Ascending aorta (tissue), 2 donors: ENCODE measurements at regions of chr15 and their contacts with region 1.

Region 1: DNA sequence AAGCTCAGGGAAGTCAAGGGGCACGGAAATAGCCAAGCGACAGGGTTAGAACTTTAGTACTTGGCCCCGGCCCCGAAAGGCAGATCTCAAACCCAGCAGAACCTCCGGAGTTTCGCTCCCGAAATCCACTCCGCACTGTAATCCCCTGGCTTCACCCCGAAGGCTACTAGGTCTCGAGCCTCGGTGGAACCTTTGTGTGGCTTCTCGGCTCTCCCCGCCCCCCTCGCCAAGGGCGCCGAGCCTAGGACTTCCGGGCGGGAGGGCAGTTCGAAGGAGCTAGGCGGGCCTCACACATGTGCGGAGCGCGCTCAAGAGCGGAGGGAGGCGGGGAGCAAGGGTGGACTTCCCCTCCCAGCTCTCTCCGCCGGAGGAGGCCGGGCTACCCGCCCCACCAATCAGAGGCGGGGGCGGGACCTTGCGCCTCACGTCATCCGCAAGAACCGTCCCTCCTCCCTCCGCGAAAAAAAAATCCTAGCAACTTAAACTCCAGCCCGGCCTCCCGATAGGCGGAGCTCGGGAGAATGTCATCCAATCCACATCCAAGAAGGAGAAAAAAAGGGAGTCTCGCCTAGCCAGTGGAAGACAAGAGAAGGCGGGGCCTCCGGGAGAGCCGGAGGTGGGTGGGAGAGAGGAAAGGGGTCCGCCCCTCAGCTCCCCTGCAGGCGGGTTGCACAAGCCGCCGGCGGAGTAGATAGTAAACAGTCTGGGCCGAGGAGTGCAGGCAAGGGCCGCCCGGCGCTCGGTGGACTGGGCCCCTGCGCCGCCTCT is 2.4 kb upstream of the SIN3A start:
- DNase-seq: peak; percentile 96 to 99
- H3K4me3 ChIP-seq: peak overlapping the region; percentile 77 to 96
- H3K27ac ChIP-seq: peak overlapping the region; percentile 97 to 98
- H3K4me1 ChIP-seq: peaks cover 2 to 13% of the 10 kb centered on the region in 2 donors
- H3K27me3 ChIP-seq: no peaks in the 10 kb centered on the region
- CTCF ChIP-seq: no peak

Region 2: GRCh38 chr15:75023181-75023871 is 430.6 kb before region 1 on chr15 and contains the start of gene PPCDC:
- intact Hi-C with region 1: loop called (anchors 10 kb)
- DNase-seq: peak; percentile 85 to 98
- H3K4me3 ChIP-seq: peak within 1 kb of the TSS; percentile 81 to 97
- H3K27ac ChIP-seq: peak within 1 kb of the TSS; percentile 78 to 91
- H3K4me1 ChIP-seq: peaks cover 4 to 10% of the 10 kb centered on the region in 2 donors
- H3K27me3 ChIP-seq: no peaks in the 10 kb centered on the region
- CTCF ChIP-seq: no peak
- total RNA-seq, gene PPCDC: 8.9 TPM

Region 3: GRCh38 chr15:75367913-75368688 is 85.8 kb before region 1 on chr15 and contains the start of gene MAN2C1:
- intact Hi-C with region 1: loop called (anchors 1 kb)
- DNase-seq: peak; percentile 73 to 97
- H3K4me3 ChIP-seq: peak within 1 kb of the TSS; percentile 94 to 98
- H3K27ac ChIP-seq: peak within 1 kb of the TSS; percentile 99
- H3K4me1 ChIP-seq: peaks cover 5 to 8% of the 10 kb centered on the region in 2 donors
- H3K27me3 ChIP-seq: no peaks in the 10 kb centered on the region
- CTCF ChIP-seq: peak; percentile 69 to 82 (median 72)
- total RNA-seq, gene MAN2C1: 447 TPM

Region 4: DNA sequence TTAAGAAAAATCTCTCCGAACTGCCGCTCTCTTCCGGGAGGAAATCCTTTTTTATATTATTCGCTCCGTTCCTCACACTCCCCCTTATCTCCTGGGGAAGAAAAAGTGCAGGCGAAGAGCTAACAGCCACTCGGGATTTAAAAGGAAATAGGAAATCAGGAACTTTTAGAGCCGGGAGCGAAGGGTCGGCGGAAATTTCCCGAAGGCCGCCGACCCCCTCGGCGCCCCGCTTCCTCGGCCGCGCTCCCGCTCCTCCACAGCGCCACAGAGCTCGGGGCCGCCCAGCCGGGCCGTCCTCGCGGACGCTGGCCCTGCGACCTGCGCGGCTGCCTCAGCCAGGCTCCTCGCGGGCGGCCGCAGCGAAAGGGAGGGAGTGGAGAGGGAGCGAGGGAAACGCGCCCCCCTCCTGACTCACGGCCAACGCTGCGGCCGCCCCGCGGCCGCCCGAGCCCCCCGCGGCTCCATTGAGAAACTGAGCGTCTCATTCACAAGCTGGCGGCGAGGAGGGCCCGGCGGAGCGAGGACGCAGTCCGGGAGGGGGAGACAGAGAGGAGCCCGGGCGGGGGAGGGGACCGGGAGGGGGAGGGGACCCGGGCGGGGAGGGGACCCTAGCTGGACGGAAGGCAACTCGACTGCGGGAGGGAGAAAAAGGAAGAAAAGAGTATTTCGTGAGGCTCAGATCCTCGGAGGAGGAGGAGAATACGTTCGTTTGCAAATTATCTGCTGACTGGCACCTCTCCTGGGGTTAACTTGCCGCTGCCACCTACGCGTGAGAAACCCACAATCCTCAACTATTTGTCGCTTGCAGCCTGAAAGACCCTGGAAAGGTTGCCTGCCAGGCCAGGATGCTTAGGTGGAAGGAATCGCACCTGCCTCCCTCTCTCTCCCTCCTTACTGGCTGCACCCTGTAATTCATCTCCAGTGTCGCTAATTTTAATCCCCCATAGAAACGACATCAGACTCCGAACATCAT is 125.3 kb after region 1 on chr15 and contains the start of gene PTPN9:
- intact Hi-C with region 1: loop called (anchors 5 kb)
- DNase-seq: peak in 1 of 2 donors; percentile 86
- H3K4me3 ChIP-seq: peak within 1 kb of the TSS; percentile 94 to 97
- H3K27ac ChIP-seq: peak within 1 kb of the TSS; percentile 85 to 88
- H3K4me1 ChIP-seq: peaks cover 4 to 7% of the 10 kb centered on the region in 2 donors
- H3K27me3 ChIP-seq: no peaks in the 10 kb centered on the region
- CTCF ChIP-seq: peak in 2 of 3 experiments; percentile 54 to 77
- total RNA-seq, gene PTPN9: 7.1 TPM

Region 5: DNA sequence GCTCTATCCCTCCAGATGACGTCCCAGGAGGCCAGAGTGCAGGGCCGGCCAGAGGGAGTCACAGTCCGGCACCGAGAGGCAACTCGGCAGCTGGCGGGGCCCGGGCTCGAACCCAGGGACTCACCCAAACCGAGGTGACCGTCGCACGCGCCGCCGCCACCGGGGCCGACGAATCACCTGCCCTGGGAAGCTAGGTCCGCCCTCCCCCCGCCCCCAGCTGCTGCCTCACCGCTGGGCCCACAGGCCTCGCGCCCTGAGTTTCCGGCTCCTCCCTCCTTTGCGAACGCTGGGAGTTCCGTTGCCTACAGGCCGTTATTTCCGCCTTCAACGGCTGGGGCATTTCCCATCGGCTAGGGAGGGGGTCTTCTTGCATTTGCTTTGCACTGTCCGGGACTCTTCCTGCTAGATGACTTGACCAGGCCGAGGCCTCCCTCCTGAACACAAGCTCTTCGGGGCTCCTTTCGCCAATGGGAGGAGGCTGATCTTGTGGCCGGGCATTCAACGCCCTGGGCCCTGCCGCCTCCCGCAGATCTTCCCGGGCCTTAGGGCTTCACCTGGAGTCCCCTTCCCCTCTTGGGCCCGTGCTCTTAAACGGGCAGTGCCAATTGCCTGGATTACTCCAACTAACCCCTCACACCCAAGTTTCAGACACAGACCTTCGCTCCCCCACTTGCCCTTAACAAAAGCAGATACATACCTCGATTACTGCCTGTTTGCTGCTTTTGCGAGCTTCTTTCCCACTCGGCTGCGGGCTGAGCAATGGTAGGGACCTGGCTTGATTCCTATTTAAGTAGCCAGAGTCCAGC is 171.9 kb after region 1 on chr15 and contains the start of gene SNUPN:
- intact Hi-C with region 1: loop called (anchors 5 kb)
- DNase-seq: peak; percentile 77 to 96
- H3K4me3 ChIP-seq: peak within 1 kb of the TSS; percentile 90 to 96
- H3K27ac ChIP-seq: peak within 1 kb of the TSS; percentile 93 to 97
- H3K4me1 ChIP-seq: peaks cover 0 to 10% of the 10 kb centered on the region in 2 donors
- H3K27me3 ChIP-seq: no peaks in the 10 kb centered on the region
- CTCF ChIP-seq: no peak
- total RNA-seq, gene SNUPN: 6.7 TPM

Region 6: GRCh38 chr15:75647370-75648155 is 193.7 kb after region 1 on chr15 and contains the start of gene SNX33:
- intact Hi-C with region 1: loop called (anchors 5 kb)
- DNase-seq: peak in 1 of 2 donors; percentile 91
- H3K4me3 ChIP-seq: peak within 1 kb of the TSS; percentile 86 to 94
- H3K27ac ChIP-seq: peak within 1 kb of the TSS; percentile 98 to 99
- H3K4me1 ChIP-seq: peaks cover 24 to 43% of the 10 kb centered on the region in 2 donors
- H3K27me3 ChIP-seq: no peaks in the 10 kb centered on the region
- CTCF ChIP-seq: peak; percentile 35 to 59 (median 46)
- total RNA-seq, gene SNX33: 53.5 TPM

Region 7: DNA sequence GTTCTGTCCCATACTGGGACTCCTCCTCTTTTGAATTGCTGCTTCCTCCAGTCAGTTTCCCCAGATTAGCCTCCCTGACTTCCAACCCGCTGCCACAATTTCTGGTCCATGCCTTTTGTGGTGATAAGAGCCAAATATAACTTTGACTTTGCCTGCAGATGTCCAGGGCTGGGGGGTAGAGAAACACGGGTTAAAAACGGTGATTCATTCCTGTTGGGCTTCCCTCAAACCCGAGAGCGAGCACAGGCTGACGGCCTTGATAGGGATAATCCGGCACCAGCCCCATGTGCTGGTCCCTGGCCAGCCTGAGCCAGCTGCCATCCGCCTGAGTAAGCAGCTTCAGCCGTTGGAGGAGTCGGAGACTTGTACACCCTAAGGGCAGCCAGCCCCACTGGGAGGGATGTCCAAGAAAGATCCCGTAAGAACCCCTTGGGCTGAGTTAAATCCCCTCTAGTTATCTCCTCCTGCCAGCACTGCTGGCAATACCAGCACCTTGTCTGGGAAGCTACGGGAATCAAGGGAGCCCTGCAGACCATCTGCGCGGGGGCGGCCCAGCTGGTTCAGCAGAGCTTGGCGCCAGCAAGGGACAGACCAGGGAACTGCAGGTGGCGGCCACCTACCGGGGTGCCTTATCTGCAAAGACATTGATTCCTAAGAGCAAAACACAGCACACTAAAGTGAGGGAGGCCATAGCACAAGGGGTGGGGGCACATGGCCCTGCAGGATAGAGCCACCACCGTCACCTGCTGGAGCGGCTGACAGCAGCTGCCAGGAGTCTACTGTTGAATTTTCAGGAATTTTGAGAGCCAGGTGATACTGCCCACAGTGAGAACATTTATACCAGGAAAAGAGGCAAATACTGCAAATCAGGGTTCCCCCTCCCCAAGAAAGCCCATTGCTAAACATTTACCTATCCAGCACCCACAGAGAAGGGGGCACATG is 240.6 kb after region 1 on chr15:
- intact Hi-C with region 1: loop called (anchors 5 kb)
- DNase-seq: peak; percentile 69 to 95
- H3K4me3 ChIP-seq: peak overlapping the region in 1 of 2 donors; percentile 1
- H3K27ac ChIP-seq: peak overlapping the region; percentile 94 to 97
- H3K4me1 ChIP-seq: peaks cover 45 to 61% of the 10 kb centered on the region in 2 donors
- H3K27me3 ChIP-seq: no peaks in the 10 kb centered on the region
- CTCF ChIP-seq: peak; percentile 50 to 71 (median 62)